ENCODE measurements at regions of chr22 and their contacts with region 1.

Region 1: DNA sequence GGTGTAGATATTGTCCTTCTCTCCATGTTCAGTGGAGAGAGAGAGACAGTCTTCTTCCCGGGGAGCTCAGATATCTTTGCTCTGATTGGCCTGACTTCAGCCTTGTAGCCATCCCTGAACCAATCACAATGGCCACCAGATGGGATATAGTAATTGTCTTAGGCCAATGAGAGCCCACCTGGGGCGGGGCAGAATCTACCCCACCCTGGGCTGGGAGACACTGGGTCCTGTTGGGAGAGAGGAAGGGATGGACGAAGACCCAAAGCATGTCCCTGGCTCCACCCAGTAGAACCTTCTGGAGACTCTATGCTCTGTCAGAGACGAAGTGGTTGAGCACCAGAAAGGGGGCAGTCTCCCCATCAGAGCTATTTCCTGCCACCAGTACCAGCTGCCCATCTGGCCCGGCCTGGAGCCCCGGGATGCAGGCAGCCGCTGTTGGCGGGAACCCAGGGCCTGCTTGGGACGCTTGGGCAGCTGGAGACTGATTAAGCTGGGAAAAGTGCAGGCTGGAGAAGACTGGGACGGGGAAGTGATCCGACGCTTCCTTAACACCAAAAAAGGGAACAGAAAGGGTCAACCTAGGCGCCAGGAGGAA is 31.6 kb upstream of the CBX7 start:
- DNase-seq: peak in 1 of 5 donors; percentile 19
- H3K4me3 ChIP-seq: no peak overlapping the region
- H3K27ac ChIP-seq: no peak overlapping the region
- H3K4me1 ChIP-seq: peaks cover 6% of the 10 kb centered on the region
- H3K27me3 ChIP-seq: no peaks in the 10 kb centered on the region
- CTCF ChIP-seq: no peak
- EP300 ChIP-seq: no peak
- POLR2A ChIP-seq: no peak

Region 2: DNA sequence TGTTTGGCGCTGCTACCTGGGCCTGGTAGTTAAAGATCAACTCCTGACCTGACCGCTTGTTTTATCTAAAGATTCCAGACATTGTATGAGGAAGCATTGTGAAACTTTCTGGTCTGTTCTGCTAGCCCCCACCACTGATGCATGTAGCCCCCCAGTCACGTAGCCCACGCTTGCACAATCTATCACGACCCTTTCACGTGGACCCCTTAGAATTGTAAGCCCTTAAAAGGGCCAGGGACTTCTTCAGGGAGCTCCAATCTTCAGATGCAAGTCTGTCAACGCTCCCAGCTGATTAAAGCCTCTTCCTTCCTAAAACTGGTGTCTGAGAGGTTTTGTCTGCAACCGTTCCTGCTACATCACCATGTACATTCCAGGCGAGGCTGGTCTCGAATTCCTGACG is 128.4 kb before region 1 on chr22:
- intact Hi-C with region 1: no loop called
- DNase-seq: no peak
- H3K4me3 ChIP-seq: no peak overlapping the region
- H3K27ac ChIP-seq: no peak overlapping the region
- H3K4me1 ChIP-seq: peaks cover 3% of the 10 kb centered on the region
- H3K27me3 ChIP-seq: no peaks in the 10 kb centered on the region
- CTCF ChIP-seq: no peak
- EP300 ChIP-seq: no peak
- POLR2A ChIP-seq: no peak

Region 3: GRCh38 chr22:39087881-39088684 is 96.0 kb before region 1 on chr22:
- intact Hi-C with region 1: no loop called
- DNase-seq: peak; percentile 49 to 78 (median 64)
- H3K4me3 ChIP-seq: no peak overlapping the region
- H3K27ac ChIP-seq: no peak overlapping the region
- H3K4me1 ChIP-seq: no peaks in the 10 kb centered on the region
- H3K27me3 ChIP-seq: no peaks in the 10 kb centered on the region
- CTCF ChIP-seq: no peak
- EP300 ChIP-seq: no peak
- POLR2A ChIP-seq: no peak

Region 4: DNA sequence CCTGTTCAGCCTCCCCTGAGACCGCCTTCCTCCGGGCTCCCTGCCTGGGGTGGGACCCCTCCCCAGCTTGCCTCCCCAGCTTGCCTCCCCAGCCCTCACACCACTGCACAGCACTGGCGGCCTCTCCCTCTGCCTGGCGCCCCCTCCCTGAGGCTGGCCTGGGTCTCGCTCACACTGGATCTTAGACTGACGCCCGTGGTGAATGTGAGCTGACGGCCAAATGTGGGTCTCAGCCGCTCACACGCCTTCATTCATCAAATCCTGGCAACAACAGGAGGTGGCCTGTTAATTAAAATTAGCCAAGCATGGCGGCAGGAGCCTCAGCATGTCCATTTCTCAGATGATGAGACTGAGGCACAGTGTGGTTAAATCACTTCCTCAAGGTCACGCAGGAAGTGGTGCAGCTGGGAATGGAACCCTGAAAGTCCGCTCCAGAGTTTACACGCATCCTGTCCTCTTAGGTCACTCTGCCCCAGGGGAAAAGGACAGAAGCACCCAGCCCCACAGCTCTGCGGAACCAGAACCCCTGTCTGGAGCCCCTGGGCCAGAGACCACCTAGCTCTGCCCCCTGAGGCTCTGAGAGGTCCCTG is 115.6 kb after region 1 on chr22:
- intact Hi-C with region 1: loop called in 1 of 4 experiments (anchors 5 kb)
- DNase-seq: no peak
- H3K4me3 ChIP-seq: no peak overlapping the region
- H3K27ac ChIP-seq: no peak overlapping the region
- H3K4me1 ChIP-seq: peaks cover 22% of the 10 kb centered on the region
- H3K27me3 ChIP-seq: no peaks in the 10 kb centered on the region
- CTCF ChIP-seq: no peak
- EP300 ChIP-seq: no peak
- POLR2A ChIP-seq: no peak